Right cardiac atrium (tissue), 5 donors: ENCODE measurements at regions of chr15 and their contacts with region 1.

Region 1: DNA sequence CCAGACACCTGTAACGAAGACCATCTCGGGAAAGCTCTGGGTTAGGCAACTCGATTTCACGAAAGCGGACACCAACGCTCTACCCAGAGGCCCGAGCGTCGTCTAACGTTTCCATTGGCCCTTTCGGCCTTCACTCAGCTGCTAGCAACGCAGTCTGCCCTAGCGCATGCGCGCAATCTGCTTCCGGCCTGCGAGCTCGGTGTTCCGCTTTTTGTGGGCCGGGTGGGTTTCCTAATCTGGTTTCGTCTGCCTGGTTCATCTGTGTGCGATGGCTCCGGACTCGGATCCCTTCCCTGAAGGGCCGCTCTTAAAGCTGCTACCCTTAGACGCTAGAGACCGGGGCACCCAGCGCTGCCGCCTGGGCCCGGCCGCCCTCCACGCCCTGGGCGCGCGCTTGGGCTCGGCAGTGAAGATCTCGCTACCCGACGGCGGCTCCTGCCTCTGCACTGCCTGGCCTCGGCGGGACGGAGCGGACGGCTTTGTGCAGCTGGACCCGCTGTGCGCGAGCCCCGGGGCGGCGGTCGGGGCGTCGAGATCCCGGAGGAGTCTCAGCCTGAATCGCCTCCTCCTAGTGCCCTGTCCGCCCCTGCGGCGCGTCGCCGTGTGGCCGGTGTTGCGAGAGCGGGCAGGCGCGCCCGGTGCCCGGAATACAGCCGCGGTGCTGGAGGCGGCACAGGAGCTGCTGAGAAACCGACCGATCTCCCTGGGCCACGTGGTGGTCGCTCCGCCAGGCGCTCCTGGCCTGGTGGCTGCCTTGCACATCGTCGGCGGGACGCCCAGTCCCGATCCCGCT is 24.0 kb upstream of the GATM start:
- DNase-seq: peak; percentile 97 to 98 (median 97)
- ATAC-seq: peak; percentile 98
- H3K4me3 ChIP-seq: peak overlapping the region; percentile 76
- H3K27ac ChIP-seq: peak overlapping the region; percentile 95
- H3K4me1 ChIP-seq: no peaks in the 10 kb centered on the region
- H3K27me3 ChIP-seq: no peaks in the 10 kb centered on the region

Region 2: GRCh38 chr15:44623178-44623577 is 779.2 kb before region 1 on chr15:
- intact Hi-C with region 1: no loop called
- DNase-seq: no peak
- ATAC-seq: no peak
- H3K4me3 ChIP-seq: no peak overlapping the region
- H3K27ac ChIP-seq: no peak overlapping the region
- H3K4me1 ChIP-seq: no peaks in the 10 kb centered on the region
- H3K27me3 ChIP-seq: no peaks in the 10 kb centered on the region

Region 3: GRCh38 chr15:45166834-45167630 is 235.3 kb before region 1 on chr15:
- intact Hi-C with region 1: loop called in 2 of 4 experiments (anchors 10 kb)
- DNase-seq: peak; percentile 91 to 96 (median 96)
- ATAC-seq: peak; percentile 85 to 87
- H3K4me3 ChIP-seq: peak overlapping the region; percentile 76
- H3K27ac ChIP-seq: peak overlapping the region; percentile 98
- H3K4me1 ChIP-seq: peaks cover 5% of the 10 kb centered on the region
- H3K27me3 ChIP-seq: no peaks in the 10 kb centered on the region

Region 4: GRCh38 chr15:45307230-45307924 is 95.0 kb before region 1 on chr15:
- intact Hi-C with region 1: loop called in 3 of 4 experiments (anchors 5 kb)
- DNase-seq: no peak
- ATAC-seq: peak; percentile 75 to 83
- H3K4me3 ChIP-seq: peak overlapping the region; percentile 29
- H3K27ac ChIP-seq: no peak overlapping the region
- H3K4me1 ChIP-seq: no peaks in the 10 kb centered on the region
- H3K27me3 ChIP-seq: no peaks in the 10 kb centered on the region

Region 5: GRCh38 chr15:45351229-45351628 is 51.1 kb before region 1 on chr15:
- intact Hi-C with region 1: no loop called
- DNase-seq: no peak
- ATAC-seq: no peak
- H3K4me3 ChIP-seq: no peak overlapping the region
- H3K27ac ChIP-seq: no peak overlapping the region
- H3K4me1 ChIP-seq: no peaks in the 10 kb centered on the region
- H3K27me3 ChIP-seq: no peaks in the 10 kb centered on the region

Region 6: DNA sequence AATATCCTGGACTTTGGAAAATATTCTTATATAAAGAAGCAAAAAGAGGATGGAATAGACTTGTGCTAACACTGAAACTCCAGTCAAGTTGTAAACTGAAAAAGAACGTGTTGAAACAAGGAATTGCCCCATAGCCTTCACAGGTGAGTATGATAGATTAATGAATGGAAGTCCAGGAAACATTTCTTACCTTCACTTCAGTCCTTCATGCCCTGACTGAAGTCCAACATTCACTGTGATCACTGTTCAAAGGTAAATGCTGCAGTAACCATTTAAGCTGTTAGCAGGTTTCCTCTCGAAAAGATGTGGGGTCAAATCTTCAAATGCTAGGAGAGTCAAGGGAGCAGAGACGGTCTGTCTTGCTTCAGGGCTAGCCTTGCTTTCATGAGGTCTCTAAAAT is 74.1 kb after region 1 on chr15:
- intact Hi-C with region 1: no loop called
- DNase-seq: no peak
- ATAC-seq: no peak
- H3K4me3 ChIP-seq: no peak overlapping the region
- H3K27ac ChIP-seq: no peak overlapping the region
- H3K4me1 ChIP-seq: no peaks in the 10 kb centered on the region
- H3K27me3 ChIP-seq: no peaks in the 10 kb centered on the region

Region 7: GRCh38 chr15:45648521-45649200 is 246.3 kb after region 1 on chr15:
- intact Hi-C with region 1: no loop called
- DNase-seq: no peak
- ATAC-seq: peak; percentile 15 to 34
- H3K4me3 ChIP-seq: no peak overlapping the region
- H3K27ac ChIP-seq: no peak overlapping the region
- H3K4me1 ChIP-seq: peaks cover 11% of the 10 kb centered on the region
- H3K27me3 ChIP-seq: no peaks in the 10 kb centered on the region